ENCODE measurements at regions of chr12 and their contacts with region 1.

Region 1: GRCh38 chr12:125239563-125239962 is 174.3 kb downstream of the AACS start:
- DNase-seq: no peak
- H3K4me3 Mint-ChIP-seq: no peak overlapping the region
- H3K27ac Mint-ChIP-seq: no peak overlapping the region
- H3K4me1 Mint-ChIP-seq: no peaks in the 10 kb centered on the region
- H3K27me3 Mint-ChIP-seq: no peaks in the 10 kb centered on the region

Region 2: GRCh38 chr12:125185740-125186470 is 53.7 kb before region 1 on chr12:
- intact Hi-C with region 1: no loop called
- DNase-seq: peak; percentile 85
- H3K4me3 Mint-ChIP-seq: peak within 1 kb of the TSS; percentile 61
- H3K27ac Mint-ChIP-seq: no peak within 1 kb of the TSS
- H3K4me1 Mint-ChIP-seq: peaks cover 14% of the 10 kb centered on the region
- H3K27me3 Mint-ChIP-seq: peaks cover 64% of the 10 kb centered on the region

Region 3: GRCh38 chr12:125340791-125341190 is 101.2 kb after region 1 on chr12:
- intact Hi-C with region 1: no loop called
- DNase-seq: no peak
- H3K4me3 Mint-ChIP-seq: no peak overlapping the region
- H3K27ac Mint-ChIP-seq: no peak overlapping the region
- H3K4me1 Mint-ChIP-seq: no peaks in the 10 kb centered on the region
- H3K27me3 Mint-ChIP-seq: peaks cover 14% of the 10 kb centered on the region

Region 4: GRCh38 chr12:125402874-125403789 is 163.6 kb after region 1 on chr12:
- intact Hi-C with region 1: loop called (anchors 5 kb)
- DNase-seq: peak; percentile 75
- H3K4me3 Mint-ChIP-seq: no peak overlapping the region
- H3K27ac Mint-ChIP-seq: no peak overlapping the region
- H3K4me1 Mint-ChIP-seq: peaks cover 3% of the 10 kb centered on the region
- H3K27me3 Mint-ChIP-seq: peaks cover 6% of the 10 kb centered on the region